Spleen (tissue), 13 donors: ENCODE measurements at regions of chr5 and their contacts with region 1.

Region 1: DNA sequence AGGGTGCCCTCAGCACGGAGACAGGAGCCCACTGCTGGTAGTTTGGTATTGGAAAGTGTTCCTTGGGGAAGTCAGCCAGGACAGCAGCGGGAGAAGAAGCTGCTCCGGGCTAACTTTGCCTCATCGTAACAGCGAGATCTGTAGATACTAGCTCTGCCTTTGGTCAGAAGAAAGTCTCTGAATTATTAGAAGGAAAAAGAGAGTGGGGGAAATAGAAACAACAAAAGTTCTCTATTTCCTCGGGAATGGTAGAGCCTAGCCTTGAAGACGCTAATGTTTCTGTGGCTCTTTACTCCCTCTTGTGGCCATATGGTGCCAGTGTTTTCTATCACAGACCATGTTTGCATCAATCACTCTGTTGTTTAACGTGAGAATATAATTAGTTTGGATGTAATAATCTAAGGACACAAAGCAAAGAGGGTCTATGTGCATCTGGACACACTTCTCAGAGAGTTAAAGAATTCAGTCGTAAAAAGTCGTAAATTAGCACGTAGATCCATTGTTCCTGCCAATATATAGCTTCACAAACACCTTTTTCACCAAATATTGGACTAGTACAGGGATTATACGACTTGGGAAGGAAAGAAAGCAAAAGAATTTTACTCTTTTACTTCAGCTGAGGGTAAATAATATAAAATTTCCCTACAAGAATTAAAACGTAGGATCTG is 40.2 kb upstream of the HSD17B4 start:
- DNase-seq: no peak
- H3K4me3 ChIP-seq: peak overlapping the region; percentile 17 to 66 (median 36)
- H3K27ac ChIP-seq: peak overlapping the region; percentile 37 to 80 (median 73)
- H3K4me1 ChIP-seq: peaks cover 0 to 60% (median 20%) of the 10 kb centered on the region in 6 donors
- H3K27me3 ChIP-seq: no peaks in the 10 kb centered on the region
- CTCF ChIP-seq: peak; percentile 83 to 96 (median 93)
- POLR2A ChIP-seq: no peak

Region 2: GRCh38 chr5:118987988-118988865 is 423.8 kb before region 1 on chr5 and contains the start of gene DTWD2:
- intact Hi-C with region 1: loop called (anchors 10 kb)
- DNase-seq: peak; percentile 99
- H3K4me3 ChIP-seq: peak within 1 kb of the TSS; percentile 66 to 84 (median 78)
- H3K27ac ChIP-seq: peak within 1 kb of the TSS; percentile 90 to 95 (median 94)
- H3K4me1 ChIP-seq: peaks cover 5 to 37% (median 16%) of the 10 kb centered on the region in 6 donors
- H3K27me3 ChIP-seq: no peaks in the 10 kb centered on the region
- CTCF ChIP-seq: peak; percentile 89 to 98 (median 97)
- POLR2A ChIP-seq: peak in 1 of 3 donors; percentile 69
- total RNA-seq, gene DTWD2: 7.2 to 25.5 (median 9.6) TPM

Region 3: DNA sequence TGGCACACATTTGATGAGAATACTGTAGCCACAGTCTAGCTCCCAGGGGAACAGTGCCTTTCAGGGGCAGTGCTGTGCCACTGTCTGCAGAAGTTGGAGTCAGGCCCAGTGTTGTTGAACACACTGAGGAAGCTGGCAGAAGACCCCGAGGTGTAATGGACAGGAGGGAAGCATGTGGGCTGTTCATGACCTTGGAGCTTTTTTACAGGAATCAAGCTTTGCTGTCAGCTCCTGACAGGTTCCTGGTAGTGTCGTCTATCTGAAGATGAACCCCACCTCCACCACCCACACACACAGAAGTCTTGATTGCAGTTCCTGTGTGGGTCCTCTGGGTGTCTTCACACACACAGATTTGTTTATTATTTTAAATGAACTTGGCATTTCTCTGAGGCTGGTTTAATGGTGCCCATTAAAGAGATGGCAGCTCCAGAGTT is 96.5 kb before region 1 on chr5:
- intact Hi-C with region 1: loop called (anchors 10 kb)
- DNase-seq: peak; percentile 77
- H3K4me3 ChIP-seq: peak overlapping the region in 1 of 8 donors; percentile 8
- H3K27ac ChIP-seq: peak overlapping the region; percentile 2 to 88 (median 62)
- H3K4me1 ChIP-seq: peaks cover 39 to 100% (median 91%) of the 10 kb centered on the region in 6 donors
- H3K27me3 ChIP-seq: no peaks in the 10 kb centered on the region
- CTCF ChIP-seq: peak in 10 of 11 experiments; percentile 33 to 75 (median 56)
- POLR2A ChIP-seq: no peak

Region 4: GRCh38 chr5:120354126-120354525 is 942.1 kb after region 1 on chr5:
- intact Hi-C with region 1: no loop called
- DNase-seq: no peak
- H3K4me3 ChIP-seq: no peak overlapping the region
- H3K27ac ChIP-seq: no peak overlapping the region
- H3K4me1 ChIP-seq: no peaks in the 10 kb centered on the region
- H3K27me3 ChIP-seq: no peaks in the 10 kb centered on the region
- CTCF ChIP-seq: no peak
- POLR2A ChIP-seq: no peak